Activated T-helper 2 cell treated with anti-CD3 and anti-CD28 coated beads, Interferon-gamma antibody, Interleukin-2, Interleukin-4, amounts not matched to agents 10 μg/mL and 5 μg/mL and 100 μg/mL, durations not matched to agents 14 hours and 24 hours and 36 hours (primary cell): ENCODE measurements at regions of chr3 and their contacts with region 1.

Region 1: DNA sequence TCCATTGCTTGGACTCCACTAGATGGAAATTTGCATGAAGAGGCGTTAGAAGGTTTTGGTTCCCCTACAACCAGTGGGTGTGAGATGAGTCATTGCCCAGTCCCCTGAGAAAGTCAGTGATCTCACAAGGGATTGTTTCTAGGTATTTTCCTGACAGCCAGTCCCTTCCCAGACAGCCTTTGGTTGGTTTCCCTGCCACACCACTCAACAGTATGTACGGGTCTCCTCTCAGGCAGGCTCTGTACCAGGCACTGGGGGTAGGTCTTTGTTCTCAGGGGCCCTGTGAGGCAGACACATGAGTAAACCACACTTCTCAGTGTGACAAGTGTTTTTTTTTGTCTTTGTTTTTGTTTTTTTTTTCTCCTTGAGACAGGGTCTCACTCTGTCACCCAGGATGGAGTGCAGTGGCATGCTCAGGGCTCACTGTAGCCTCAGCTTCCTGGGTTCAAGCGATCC is 4.0 kb downstream of the LAMP3 start:
- DNase-seq: no peak
- H3K4me3 Mint-ChIP-seq: no peak overlapping the region
- H3K27ac Mint-ChIP-seq: peak overlapping the region; percentile 76
- H3K4me1 Mint-ChIP-seq: peaks cover 32% of the 10 kb centered on the region
- H3K27me3 Mint-ChIP-seq: no peaks in the 10 kb centered on the region

Region 2: GRCh38 chr3:183172051-183172639 is 13.6 kb after region 1 on chr3:
- intact Hi-C with region 1: loop called (anchors 2 kb)
- DNase-seq: no peak
- H3K4me3 Mint-ChIP-seq: no peak overlapping the region
- H3K27ac Mint-ChIP-seq: no peak overlapping the region
- H3K4me1 Mint-ChIP-seq: no peaks in the 10 kb centered on the region
- H3K27me3 Mint-ChIP-seq: peaks cover 22% of the 10 kb centered on the region